ENCODE measurements at regions of chr5 and their contacts with region 1.

Region 1: GRCh38 chr5:147188200-147189108 is 46.4 kb upstream of the STK32A start:
- DNase-seq: peak; percentile 59
- H3K4me3 ChIP-seq: no peak overlapping the region
- H3K27ac ChIP-seq: no peak overlapping the region
- H3K4me1 ChIP-seq: no peaks in the 10 kb centered on the region
- CTCF ChIP-seq: peak; percentile 95

Region 2: DNA sequence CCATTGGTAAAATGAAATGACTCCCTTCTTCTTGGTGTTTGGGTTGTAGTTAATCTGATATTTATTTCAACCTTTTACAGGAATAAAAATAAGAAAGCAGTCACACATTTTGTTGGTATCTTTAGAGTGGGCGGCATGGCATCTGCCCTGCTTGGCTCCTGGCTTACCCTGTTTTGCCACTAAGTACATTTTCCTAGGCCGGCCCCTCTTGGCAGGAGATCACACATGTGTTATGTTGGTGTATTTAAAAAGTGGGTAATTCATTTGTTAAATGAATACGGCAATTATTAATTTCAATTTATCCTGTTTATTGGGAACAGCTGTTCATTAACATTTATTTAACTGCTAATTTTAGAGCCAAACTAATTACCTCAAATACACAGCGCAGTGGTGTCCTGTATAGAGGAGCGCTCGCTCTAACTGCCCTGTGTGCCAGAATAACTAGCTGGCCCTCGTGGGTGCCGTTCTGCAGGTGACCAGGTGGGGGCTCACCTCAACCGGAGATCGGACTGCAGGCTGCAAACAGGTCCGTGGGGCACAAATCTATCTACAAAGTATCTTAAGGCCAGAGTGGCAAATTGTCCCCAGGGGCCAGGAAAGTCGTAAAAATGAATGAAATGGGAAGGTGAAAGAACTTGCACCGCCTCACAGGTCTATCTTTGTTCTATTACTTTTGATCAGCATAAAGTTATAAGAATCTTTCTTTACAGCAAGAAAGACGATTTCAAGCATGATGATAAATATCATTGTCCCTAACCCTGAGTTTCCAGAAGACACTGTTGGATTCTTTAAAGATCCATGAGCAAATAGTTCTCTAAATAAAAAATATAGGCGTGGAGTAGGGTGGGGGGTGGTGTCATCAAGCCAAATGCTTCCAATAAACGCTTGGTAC is 646.2 kb before region 1 on chr5:
- CTCF ChIA-PET with region 1: no interaction called
- POLR2A ChIA-PET with region 1: no interaction called
- intact Hi-C with region 1: loop called (anchors 10 kb)
- DNase-seq: peak; percentile 55
- H3K4me3 ChIP-seq: no peak overlapping the region
- H3K27ac ChIP-seq: no peak overlapping the region
- H3K4me1 ChIP-seq: no peaks in the 10 kb centered on the region
- CTCF ChIP-seq: peak; percentile 93

Region 3: DNA sequence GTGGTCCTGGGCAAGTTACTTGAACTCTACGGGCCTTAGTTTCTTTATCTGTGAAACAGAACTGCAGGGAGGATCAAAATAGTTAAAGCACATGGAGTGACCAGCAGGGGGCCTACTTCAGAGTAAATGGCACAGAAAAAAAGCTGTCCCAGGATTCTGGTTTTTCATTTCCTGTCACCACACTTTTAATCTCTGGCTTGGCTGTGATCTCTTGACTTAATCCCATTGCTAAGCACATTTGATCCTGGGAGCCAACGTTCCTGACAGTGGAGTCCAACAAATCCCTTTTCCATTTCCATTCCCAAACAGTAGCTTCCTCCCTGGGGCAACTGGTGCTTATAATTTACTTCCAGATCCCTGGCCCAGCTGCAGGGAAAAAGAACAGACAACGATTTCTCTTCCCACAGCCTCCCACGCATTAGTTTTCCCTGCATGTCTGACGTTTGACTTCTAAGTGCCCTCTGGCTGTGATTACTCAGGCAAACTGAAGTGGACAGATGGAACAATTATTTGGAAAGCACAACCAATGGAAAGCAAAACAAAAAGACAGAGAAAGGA is 90.1 kb before region 1 on chr5:
- CTCF ChIA-PET with region 1: interaction called, 7 read pairs
- POLR2A ChIA-PET with region 1: no interaction called
- intact Hi-C with region 1: loop called (anchors 1 kb)
- DNase-seq: peak; percentile 40
- H3K4me3 ChIP-seq: no peak overlapping the region
- H3K27ac ChIP-seq: no peak overlapping the region
- H3K4me1 ChIP-seq: no peaks in the 10 kb centered on the region
- CTCF ChIP-seq: peak; percentile 78

Measured in OCI-LY7 (cell line).